Thyroid gland (tissue), 4 donors: ENCODE measurements at regions of chr22 and their contacts with region 1.

Region 1: GRCh38 chr22:26086359-26086758 is 82.9 kb upstream of the SEZ6L start:
- DNase-seq: no peak
- H3K4me3 ChIP-seq: no peak overlapping the region
- H3K27ac ChIP-seq: no peak overlapping the region
- H3K4me1 ChIP-seq: no peaks in the 10 kb centered on the region
- H3K27me3 ChIP-seq: no peaks in the 10 kb centered on the region
- CTCF ChIP-seq: peak in 4 of 6 experiments; percentile 33 to 72 (median 62)
- POLR2A ChIP-seq: no peak

Region 2: DNA sequence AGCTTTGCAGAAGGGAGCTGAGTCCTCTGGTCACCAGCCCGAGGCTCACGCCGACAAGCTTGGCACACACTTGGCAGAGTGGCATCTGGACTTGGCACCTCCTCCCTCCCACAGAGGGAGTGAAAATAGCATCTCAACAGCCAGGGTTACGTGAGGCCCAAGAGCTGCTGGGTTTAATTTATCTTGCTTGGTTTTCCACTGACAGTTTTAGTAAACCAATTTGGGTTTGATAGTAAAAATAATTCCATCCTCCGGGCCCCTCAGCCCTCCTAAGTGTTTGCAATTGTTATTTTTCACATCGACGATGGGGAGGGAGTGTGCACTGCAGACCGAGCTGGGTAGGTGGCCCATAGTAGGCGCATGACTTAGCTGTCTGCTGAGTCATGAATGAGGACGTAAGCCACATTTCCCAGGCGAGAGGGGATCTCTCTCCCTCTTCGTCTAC is 235.1 kb after region 1 on chr22:
- intact Hi-C with region 1: loop called (anchors 10 kb)
- DNase-seq: no peak
- H3K4me3 ChIP-seq: no peak overlapping the region
- H3K27ac ChIP-seq: no peak overlapping the region
- H3K4me1 ChIP-seq: no peaks in the 10 kb centered on the region
- H3K27me3 ChIP-seq: no peaks in the 10 kb centered on the region
- CTCF ChIP-seq: no peak
- POLR2A ChIP-seq: no peak

Region 3: GRCh38 chr22:26385164-26385563 is 298.8 kb after region 1 on chr22:
- intact Hi-C with region 1: no loop called
- DNase-seq: no peak
- H3K4me3 ChIP-seq: no peak overlapping the region
- H3K27ac ChIP-seq: no peak overlapping the region
- H3K4me1 ChIP-seq: no peaks in the 10 kb centered on the region
- H3K27me3 ChIP-seq: no peaks in the 10 kb centered on the region
- CTCF ChIP-seq: no peak
- POLR2A ChIP-seq: no peak